Activated CD8-positive, alpha-beta memory T cell treated with anti-CD3 and anti-CD28 coated beads, Interleukin-2, amount 10 ng/mL, durations not matched to agents 7 days and 5 days (primary cell): ENCODE measurements at regions of chr17 and their contacts with region 1.

Region 1: GRCh38 chr17:700504-701094 is 14.0 kb downstream of the VPS53 start:
- DNase-seq: no peak
- ATAC-seq: peak; percentile 55
- H3K4me3 Mint-ChIP-seq: no peak overlapping the region
- H3K27ac Mint-ChIP-seq: no peak overlapping the region
- H3K4me1 Mint-ChIP-seq: peaks cover 4% of the 10 kb centered on the region
- H3K27me3 Mint-ChIP-seq: no peaks in the 10 kb centered on the region

Region 2: GRCh38 chr17:416293-417206 is 284.0 kb before region 1 on chr17:
- CTCF ChIA-PET with region 1: interaction called, 128 read pairs
- DNase-seq: peak; percentile 77
- ATAC-seq: peak; percentile 73
- H3K4me3 Mint-ChIP-seq: peak overlapping the region; percentile 82
- H3K27ac Mint-ChIP-seq: peak overlapping the region; percentile 98
- H3K4me1 Mint-ChIP-seq: peaks cover 84% of the 10 kb centered on the region
- H3K27me3 Mint-ChIP-seq: no peaks in the 10 kb centered on the region

Region 3: DNA sequence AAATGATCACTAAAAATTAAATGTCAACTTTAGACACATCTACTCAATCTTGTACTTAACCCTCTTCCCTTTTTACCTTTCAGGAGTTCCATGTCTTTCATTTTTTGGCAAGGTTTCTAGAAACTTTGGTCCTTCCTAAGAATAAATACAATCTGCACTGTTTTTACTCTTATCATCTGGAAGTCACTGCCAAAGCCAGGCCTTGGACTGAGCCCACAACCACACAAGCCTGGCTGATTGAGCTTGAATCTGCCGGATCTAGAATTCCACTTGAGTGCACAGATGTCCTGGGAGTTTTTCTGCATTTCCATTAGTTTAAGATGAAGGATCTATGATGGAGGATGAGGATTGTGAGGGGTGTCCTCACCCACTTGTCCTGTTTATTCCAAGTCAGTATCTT is 112.1 kb before region 1 on chr17:
- CTCF ChIA-PET with region 1: no interaction called
- DNase-seq: no peak
- ATAC-seq: no peak
- H3K4me3 Mint-ChIP-seq: no peak overlapping the region
- H3K27ac Mint-ChIP-seq: no peak overlapping the region
- H3K4me1 Mint-ChIP-seq: no peaks in the 10 kb centered on the region
- H3K27me3 Mint-ChIP-seq: no peaks in the 10 kb centered on the region

Region 4: GRCh38 chr17:716238-716637 is 15.6 kb after region 1 on chr17:
- CTCF ChIA-PET with region 1: interaction called, 23 read pairs
- DNase-seq: no peak
- ATAC-seq: no peak
- H3K4me3 Mint-ChIP-seq: no peak overlapping the region
- H3K27ac Mint-ChIP-seq: no peak overlapping the region
- H3K4me1 Mint-ChIP-seq: peaks cover 28% of the 10 kb centered on the region
- H3K27me3 Mint-ChIP-seq: peaks cover 3% of the 10 kb centered on the region

Region 5: GRCh38 chr17:740240-741017 is 39.8 kb after region 1 on chr17:
- CTCF ChIA-PET with region 1: no interaction called
- DNase-seq: peak; percentile 46
- ATAC-seq: peak; percentile 42
- H3K4me3 Mint-ChIP-seq: no peak overlapping the region
- H3K27ac Mint-ChIP-seq: peak overlapping the region; percentile 56
- H3K4me1 Mint-ChIP-seq: peaks cover 11% of the 10 kb centered on the region
- H3K27me3 Mint-ChIP-seq: no peaks in the 10 kb centered on the region